Esophagus squamous epithelium (tissue), 5 donors: ENCODE measurements at regions of chr9 and their contacts with region 1.

Region 1: GRCh38 chr9:35657546-35658136 is at the start of gene RMRP:
- DNase-seq: peak; percentile 71
- H3K4me3 ChIP-seq: peak within 1 kb of the TSS; percentile 75 to 94 (median 84)
- H3K27ac ChIP-seq: peak within 1 kb of the TSS; percentile 91 to 98 (median 96)
- H3K4me1 ChIP-seq: peaks cover 11 to 53% (median 24%) of the 10 kb centered on the region in 3 donors
- H3K27me3 ChIP-seq: no peaks in the 10 kb centered on the region
- CTCF ChIP-seq: peak in 4 of 6 experiments; percentile 28 to 59 (median 45)
- POLR2A ChIP-seq: peak in 2 of 4 donors; percentile 22 to 59
- total RNA-seq, gene RMRP: 759 to 4,621 (median 3,503) TPM

Region 2: GRCh38 chr9:35732122-35732799 is 74.6 kb after region 1 on chr9 and contains the starts of genes CREB3 and TLN1:
- intact Hi-C with region 1: loop called (anchors 5 kb)
- DNase-seq: peak; percentile 92
- H3K4me3 ChIP-seq: peak within 1 kb of the TSS; percentile 69 to 91 (median 80)
- H3K27ac ChIP-seq: peak within 1 kb of the TSS; percentile 95 to 100 (median 98)
- H3K4me1 ChIP-seq: peaks cover 19 to 71% (median 35%) of the 10 kb centered on the region in 3 donors
- H3K27me3 ChIP-seq: no peaks in the 10 kb centered on the region
- CTCF ChIP-seq: peak in 2 of 6 experiments; percentile 10 to 21
- POLR2A ChIP-seq: peak in 3 of 4 donors; percentile 57 to 76 (median 76)
- total RNA-seq, gene CREB3: 10.5 to 24.2 (median 19.2) TPM
- total RNA-seq, gene TLN1: 94.7 to 233 (median 112) TPM

Region 3: DNA sequence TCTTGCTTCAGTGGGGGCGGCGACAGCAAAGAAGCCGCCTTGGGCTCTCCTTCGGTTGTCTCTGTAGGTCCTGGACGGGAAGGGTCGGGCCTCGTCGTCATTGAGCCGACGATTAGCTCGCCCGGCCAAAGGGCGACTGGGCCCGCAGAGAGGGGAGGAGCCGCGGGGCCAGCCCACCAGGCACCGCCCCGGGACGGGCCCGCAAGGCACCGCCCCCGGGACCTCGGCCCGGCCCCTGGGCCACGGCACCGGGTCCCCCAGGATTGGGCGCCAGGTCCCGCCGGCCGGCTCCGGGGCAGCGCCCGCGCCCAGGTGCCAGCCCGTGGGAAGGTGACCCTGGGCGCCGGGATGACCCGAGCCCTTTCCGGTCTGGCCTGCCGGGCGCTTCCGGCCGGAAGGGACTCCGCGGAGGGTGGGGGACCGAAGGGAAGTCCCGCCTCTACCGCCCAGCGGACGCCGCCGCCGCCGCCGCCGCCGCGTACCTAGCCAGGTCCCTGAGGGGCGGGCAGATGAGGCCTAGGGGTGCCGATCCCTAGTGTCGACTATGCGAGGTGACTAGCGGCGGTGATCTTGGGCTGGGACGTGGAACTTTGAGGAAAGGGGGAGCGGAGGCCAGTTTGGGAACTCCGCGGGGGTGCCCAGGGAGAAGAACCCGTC is 91.3 kb after region 1 on chr9 and contains the starts of genes GBA2 and RGP1:
- intact Hi-C with region 1: no loop called
- DNase-seq: no peak
- H3K4me3 ChIP-seq: peak within 1 kb of the TSS; percentile 83 to 99 (median 90)
- H3K27ac ChIP-seq: peak within 1 kb of the TSS; percentile 90 to 97 (median 94)
- H3K4me1 ChIP-seq: peaks cover 34 to 61% (median 34%) of the 10 kb centered on the region in 3 donors
- H3K27me3 ChIP-seq: no peaks in the 10 kb centered on the region
- CTCF ChIP-seq: peak in 2 of 6 experiments; percentile 5 to 13
- POLR2A ChIP-seq: peak in 2 of 4 donors; percentile 75 to 78
- total RNA-seq, gene GBA2: 14.1 to 61.8 (median 42.0) TPM
- total RNA-seq, gene RGP1: 8.0 to 17.5 (median 11.6) TPM